ENCODE measurements at regions of chr13 and their contacts with region 1.

Region 1: DNA sequence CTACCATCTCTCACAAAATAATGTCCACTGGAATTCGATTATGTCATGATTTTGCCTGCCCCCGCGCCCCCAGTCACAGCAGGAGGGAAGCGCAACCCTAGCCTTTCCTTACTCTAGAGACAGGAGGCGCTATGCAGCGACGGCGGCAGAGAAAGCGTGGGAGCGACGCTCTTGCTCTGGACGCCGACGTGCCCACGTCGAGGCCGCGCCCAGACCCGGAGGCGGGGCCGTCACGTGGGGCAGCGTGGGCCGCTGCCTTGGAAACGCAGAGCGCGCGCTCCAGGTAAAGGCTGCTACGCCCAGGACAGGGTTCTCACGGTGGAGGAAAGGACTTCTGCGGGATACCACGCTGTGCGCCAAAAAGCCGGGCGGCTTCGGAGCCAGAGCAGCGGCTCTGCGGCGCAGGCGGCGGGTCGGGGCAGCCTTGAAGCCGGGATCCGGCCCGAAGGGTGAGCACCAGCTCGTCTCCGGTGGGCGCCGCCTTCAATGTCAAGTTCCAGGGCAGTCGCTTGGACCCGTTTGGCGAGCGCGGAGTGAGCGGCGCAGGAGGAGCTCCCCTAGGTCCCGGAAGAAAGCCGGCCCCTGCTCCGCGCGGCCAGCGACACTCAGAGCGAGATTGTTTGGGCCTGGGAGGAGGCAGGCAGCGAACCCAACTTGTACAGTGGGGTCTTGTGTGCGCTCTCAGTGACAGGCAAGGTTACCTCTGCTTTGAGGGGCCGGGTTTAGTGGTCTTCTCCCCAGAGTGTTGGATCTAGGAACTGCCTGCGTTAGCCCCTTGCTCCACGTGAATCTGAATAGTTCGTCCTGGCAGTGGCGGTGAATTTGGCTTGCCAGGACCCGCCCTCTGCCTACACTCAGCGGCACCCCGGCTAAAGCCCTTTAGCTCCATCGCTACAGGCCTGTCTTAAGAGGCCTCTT is 121.7 kb downstream of the MRPL57 start:
- DNase-seq: peak; percentile 92
- H3K4me3 ChIP-seq: peak overlapping the region; percentile 95
- H3K27ac ChIP-seq: peak overlapping the region; percentile 22 to 68; a peak in 3 of 4 replicates
- H3K4me1 ChIP-seq: peaks cover 0 to 5% of the 10 kb centered on the region in 2 experiments; a peak in 3 of 4 replicates
- H3K27me3 ChIP-seq: no peaks in the 10 kb centered on the region
- CTCF ChIP-seq: peak; percentile 82
- EP300 ChIP-seq: no peak
- RAD21 ChIP-seq: no peak

Region 2: GRCh38 chr13:20814224-20814910 is 483.8 kb before region 1 on chr13:
- CTCF ChIA-PET with region 1: no interaction called
- POLR2A ChIA-PET with region 1: no interaction called
- DNase-seq: peak; percentile 58
- H3K4me3 ChIP-seq: peak overlapping the region in 1 of 2 experiments; percentile 36; a peak in 2 of 4 replicates
- H3K27ac ChIP-seq: peak overlapping the region; percentile 72 to 96
- H3K4me1 ChIP-seq: peaks cover 18 to 21% of the 10 kb centered on the region in 2 experiments
- H3K27me3 ChIP-seq: no peaks in the 10 kb centered on the region
- CTCF ChIP-seq: no peak
- EP300 ChIP-seq: peak; percentile 40 to 72; a peak in 3 of 4 replicates
- RAD21 ChIP-seq: no peak

Region 3: GRCh38 chr13:21287331-21287907 is 10.8 kb before region 1 on chr13:
- CTCF ChIA-PET with region 1: interaction called, 11 read pairs
- POLR2A ChIA-PET with region 1: interaction called, 3 read pairs
- DNase-seq: no peak
- H3K4me3 ChIP-seq: no peak overlapping the region
- H3K27ac ChIP-seq: no peak overlapping the region
- H3K4me1 ChIP-seq: no peaks in the 10 kb centered on the region
- H3K27me3 ChIP-seq: peaks cover 5% of the 10 kb centered on the region; the same call in 1 of the 2 replicates
- CTCF ChIP-seq: no peak
- EP300 ChIP-seq: no peak
- RAD21 ChIP-seq: no peak

Region 4: DNA sequence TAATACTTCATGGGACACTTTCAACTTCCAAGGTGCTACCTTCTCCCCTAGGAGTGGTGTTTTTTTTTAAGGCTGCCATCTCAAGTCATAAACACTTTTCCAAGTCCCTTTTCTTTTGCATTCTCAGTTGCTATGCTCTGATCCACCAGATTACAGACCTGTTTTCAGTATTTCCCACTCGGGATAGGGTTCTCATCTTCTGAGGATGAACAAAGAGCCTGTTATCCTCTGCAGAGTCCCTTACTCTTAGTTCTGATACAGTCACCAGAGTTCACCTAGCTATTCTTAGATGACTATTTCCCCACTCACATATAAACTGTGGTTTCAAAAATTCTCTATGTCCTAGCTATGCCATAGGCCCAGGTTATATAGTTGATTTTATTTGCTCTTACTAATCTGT is 145.0 kb after region 1 on chr13:
- CTCF ChIA-PET with region 1: no interaction called
- POLR2A ChIA-PET with region 1: no interaction called
- DNase-seq: no peak
- H3K4me3 ChIP-seq: no peak overlapping the region
- H3K27ac ChIP-seq: no peak overlapping the region
- H3K4me1 ChIP-seq: no peaks in the 10 kb centered on the region
- H3K27me3 ChIP-seq: no peaks in the 10 kb centered on the region
- CTCF ChIP-seq: no peak
- EP300 ChIP-seq: no peak
- RAD21 ChIP-seq: no peak

Region 5: GRCh38 chr13:21579754-21580316 is 281.7 kb after region 1 on chr13:
- CTCF ChIA-PET with region 1: no interaction called
- POLR2A ChIA-PET with region 1: no interaction called
- DNase-seq: no peak
- H3K4me3 ChIP-seq: no peak overlapping the region
- H3K27ac ChIP-seq: no peak overlapping the region
- H3K4me1 ChIP-seq: peaks cover 0 to 14% of the 10 kb centered on the region in 2 experiments; a peak in 1 of 4 replicates
- H3K27me3 ChIP-seq: no peaks in the 10 kb centered on the region
- CTCF ChIP-seq: no peak
- EP300 ChIP-seq: no peak
- RAD21 ChIP-seq: no peak

Measured in SK-N-SH (cell line).